AG04450 (cell line): ENCODE measurements at regions of chr3 and their contacts with region 1.

Region 1: DNA sequence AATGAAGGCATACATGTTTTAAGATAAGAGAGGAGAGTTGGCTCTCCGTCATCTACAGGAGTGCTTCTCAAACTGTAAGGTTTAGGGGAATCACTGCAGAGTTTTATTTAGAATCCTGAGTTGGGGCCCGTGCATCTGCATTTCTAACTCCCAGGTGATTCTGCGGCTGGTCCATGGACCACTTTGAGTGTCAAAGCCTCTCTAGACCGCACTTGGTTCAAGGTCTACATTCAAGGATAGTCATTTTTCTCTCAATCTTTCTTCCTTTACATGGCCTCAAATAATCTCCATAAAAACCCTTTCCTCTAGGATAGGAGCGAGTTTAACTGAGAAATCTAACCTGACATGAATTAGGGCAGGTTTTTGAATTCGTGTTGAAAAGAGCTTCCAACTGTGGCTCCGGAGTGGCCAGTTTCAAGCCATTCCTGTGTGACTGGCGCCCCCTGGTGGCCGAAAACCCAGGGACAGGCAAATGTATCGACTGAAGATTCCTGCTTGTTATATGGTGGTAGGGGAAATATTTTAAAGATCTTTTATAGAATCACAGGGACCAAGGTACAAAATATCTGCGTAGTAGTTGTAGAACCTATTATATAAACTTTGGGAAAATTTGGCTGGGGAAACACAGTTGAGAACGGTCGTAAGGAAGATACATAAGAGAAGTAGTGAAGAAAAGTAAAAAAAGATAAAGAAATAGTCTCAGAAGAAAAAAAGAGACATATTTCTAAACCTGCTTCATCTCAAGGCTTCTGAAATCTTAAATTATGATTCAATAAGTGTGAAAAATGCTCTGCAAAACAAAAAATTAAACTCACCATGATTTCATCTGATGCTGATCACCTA is 11.9 kb downstream of the GABRR3 start:
- DNase-seq: peak; percentile 41
- H3K4me3 ChIP-seq: no peak overlapping the region
- H3K27ac ChIP-seq: no peak overlapping the region
- H3K27me3 ChIP-seq: peaks cover 2% of the 10 kb centered on the region
- CTCF ChIP-seq: peak; percentile 95

Region 2: GRCh38 chr3:97764407-97765238 is 258.6 kb before region 1 on chr3 and contains the start of gene ARL6:
- CTCF ChIA-PET with region 1: interaction called, 14 read pairs
- POLR2A ChIA-PET with region 1: no interaction called
- DNase-seq: peak; percentile 59
- H3K4me3 ChIP-seq: peak within 1 kb of the TSS; percentile 88
- H3K27ac ChIP-seq: peak within 1 kb of the TSS; percentile 84
- H3K27me3 ChIP-seq: no peaks in the 10 kb centered on the region
- CTCF ChIP-seq: peak; percentile 32
- polyA plus RNA-seq, gene ARL6: 3.5 and 5.0 TPM in 2 replicates

Region 3: GRCh38 chr3:97821810-97822775 is 201.1 kb before region 1 on chr3 and contains the start of gene CRYBG3:
- CTCF ChIA-PET with region 1: interaction called, 34 read pairs
- POLR2A ChIA-PET with region 1: interaction called, 3 read pairs
- DNase-seq: peak; percentile 27
- H3K4me3 ChIP-seq: peak within 1 kb of the TSS; percentile 82
- H3K27ac ChIP-seq: peak within 1 kb of the TSS; percentile 72
- H3K27me3 ChIP-seq: no peaks in the 10 kb centered on the region
- CTCF ChIP-seq: peak; percentile 45; the same call in 1 of the 2 replicates
- polyA plus RNA-seq, gene CRYBG3: 7.4 and 9.9 TPM in 2 replicates

Region 4: GRCh38 chr3:97983933-97984491 is 39.2 kb before region 1 on chr3:
- CTCF ChIA-PET with region 1: interaction called, 12 read pairs
- POLR2A ChIA-PET with region 1: no interaction called
- DNase-seq: no peak
- H3K4me3 ChIP-seq: no peak overlapping the region
- H3K27ac ChIP-seq: no peak overlapping the region
- H3K27me3 ChIP-seq: peaks cover 9% of the 10 kb centered on the region
- CTCF ChIP-seq: no peak

Region 5: DNA sequence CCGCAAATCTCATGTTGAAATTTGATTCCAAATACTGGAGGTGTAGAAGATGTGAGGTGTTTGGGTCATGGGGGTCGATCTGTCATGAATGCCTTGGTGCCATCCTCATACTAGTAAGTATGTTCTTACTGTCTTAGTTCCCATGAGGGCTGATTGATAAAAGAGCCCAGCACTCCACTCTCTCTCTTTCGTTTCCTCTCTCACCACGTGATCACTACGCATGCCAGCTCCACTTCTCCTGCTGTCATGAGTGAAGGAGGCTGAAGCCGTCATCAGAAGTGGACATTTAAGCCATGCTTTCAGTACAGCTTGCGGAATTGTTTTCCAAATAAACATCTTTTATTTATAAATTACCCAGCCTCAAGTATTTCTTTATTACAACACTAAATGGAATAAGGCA is 149.4 kb after region 1 on chr3:
- CTCF ChIA-PET with region 1: no interaction called
- POLR2A ChIA-PET with region 1: no interaction called
- DNase-seq: no peak
- H3K4me3 ChIP-seq: no peak overlapping the region
- H3K27ac ChIP-seq: no peak overlapping the region
- H3K27me3 ChIP-seq: no peaks in the 10 kb centered on the region
- CTCF ChIP-seq: no peak

Region 6: GRCh38 chr3:99659032-99659431 is 1635.8 kb after region 1 on chr3:
- CTCF ChIA-PET with region 1: no interaction called
- POLR2A ChIA-PET with region 1: no interaction called
- DNase-seq: peak; percentile 99
- H3K4me3 ChIP-seq: no peak overlapping the region
- H3K27ac ChIP-seq: peak overlapping the region; percentile 96
- H3K27me3 ChIP-seq: no peaks in the 10 kb centered on the region
- CTCF ChIP-seq: no peak